Endothelial cell of umbilical vein (primary cell): ENCODE measurements at regions of chr16 and their contacts with region 1.

Region 1: DNA sequence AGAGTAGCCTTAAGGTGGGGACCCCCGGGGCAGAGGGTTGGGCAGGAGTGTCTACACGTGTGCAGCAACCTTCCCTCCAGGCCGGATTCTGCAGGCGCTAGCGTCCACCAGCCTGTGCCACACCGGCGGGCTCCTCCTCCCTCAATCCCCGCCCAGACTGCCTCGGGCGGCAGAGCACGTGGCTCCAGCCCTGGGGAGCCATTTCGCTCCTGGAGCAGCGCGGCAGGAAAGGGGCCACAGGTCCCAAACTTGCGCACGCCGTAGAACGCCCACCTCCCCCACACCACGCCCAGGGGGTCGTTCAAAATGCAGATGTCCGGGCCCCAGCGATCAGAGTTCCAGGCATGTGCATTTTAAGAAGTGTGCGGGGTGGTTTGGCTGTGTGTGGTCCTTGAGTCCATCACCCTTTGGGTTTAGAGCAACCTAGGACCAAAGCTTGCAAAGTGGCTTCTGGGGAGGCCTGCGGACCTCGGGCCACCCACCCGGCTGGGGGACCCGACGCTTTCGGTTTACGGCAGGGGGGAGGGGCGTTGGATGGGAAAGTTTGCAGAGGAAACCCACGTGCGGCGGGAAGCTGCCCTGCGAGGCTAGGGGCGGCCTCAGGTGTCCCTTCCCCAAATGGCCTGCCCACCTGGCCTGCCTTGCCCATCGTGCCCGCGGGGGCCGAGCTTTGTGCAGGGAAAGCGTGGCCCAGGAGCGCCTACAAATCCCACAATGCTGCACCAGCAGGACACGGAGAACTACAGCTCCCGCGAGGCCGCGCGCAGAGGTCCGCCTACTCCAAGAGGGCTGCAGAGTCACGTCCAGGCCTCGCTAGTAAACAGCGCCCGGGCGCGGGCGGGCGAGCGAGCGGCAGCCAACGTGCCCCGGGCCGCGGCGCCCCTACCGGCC is 1.4 kb downstream of the TFAP4 start:
- DNase-seq: peak; percentile 89
- H3K4me3 ChIP-seq: peak overlapping the region; percentile 58 to 89 (median 68)
- H3K27ac ChIP-seq: peak overlapping the region; percentile 51
- H3K4me1 ChIP-seq: peaks cover 15% of the 10 kb centered on the region
- H3K27me3 ChIP-seq: no peaks in the 10 kb centered on the region
- CTCF ChIP-seq: no peak
- POLR2A ChIP-seq: peak; percentile 55

Region 2: GRCh38 chr16:4136229-4136813 is 135.1 kb before region 1 on chr16:
- CTCF ChIA-PET with region 1: no interaction called
- POLR2A ChIA-PET with region 1: no interaction called
- dilution Hi-C with region 1: no loop called
- intact Hi-C with region 1: no loop called
- DNase-seq: no peak
- H3K4me3 ChIP-seq: no peak overlapping the region
- H3K27ac ChIP-seq: no peak overlapping the region
- H3K4me1 ChIP-seq: no peaks in the 10 kb centered on the region
- H3K27me3 ChIP-seq: peaks cover 0 to 4% of the 10 kb centered on the region in 2 experiments
- CTCF ChIP-seq: no peak
- POLR2A ChIP-seq: no peak

Region 3: GRCh38 chr16:4232541-4233386 is 38.7 kb before region 1 on chr16:
- CTCF ChIA-PET with region 1: no interaction called
- POLR2A ChIA-PET with region 1: no interaction called
- dilution Hi-C with region 1: no loop called
- intact Hi-C with region 1: no loop called
- DNase-seq: no peak
- H3K4me3 ChIP-seq: no peak overlapping the region
- H3K27ac ChIP-seq: no peak overlapping the region
- H3K4me1 ChIP-seq: no peaks in the 10 kb centered on the region
- H3K27me3 ChIP-seq: no peaks in the 10 kb centered on the region
- CTCF ChIP-seq: no peak
- POLR2A ChIP-seq: no peak

Region 4: DNA sequence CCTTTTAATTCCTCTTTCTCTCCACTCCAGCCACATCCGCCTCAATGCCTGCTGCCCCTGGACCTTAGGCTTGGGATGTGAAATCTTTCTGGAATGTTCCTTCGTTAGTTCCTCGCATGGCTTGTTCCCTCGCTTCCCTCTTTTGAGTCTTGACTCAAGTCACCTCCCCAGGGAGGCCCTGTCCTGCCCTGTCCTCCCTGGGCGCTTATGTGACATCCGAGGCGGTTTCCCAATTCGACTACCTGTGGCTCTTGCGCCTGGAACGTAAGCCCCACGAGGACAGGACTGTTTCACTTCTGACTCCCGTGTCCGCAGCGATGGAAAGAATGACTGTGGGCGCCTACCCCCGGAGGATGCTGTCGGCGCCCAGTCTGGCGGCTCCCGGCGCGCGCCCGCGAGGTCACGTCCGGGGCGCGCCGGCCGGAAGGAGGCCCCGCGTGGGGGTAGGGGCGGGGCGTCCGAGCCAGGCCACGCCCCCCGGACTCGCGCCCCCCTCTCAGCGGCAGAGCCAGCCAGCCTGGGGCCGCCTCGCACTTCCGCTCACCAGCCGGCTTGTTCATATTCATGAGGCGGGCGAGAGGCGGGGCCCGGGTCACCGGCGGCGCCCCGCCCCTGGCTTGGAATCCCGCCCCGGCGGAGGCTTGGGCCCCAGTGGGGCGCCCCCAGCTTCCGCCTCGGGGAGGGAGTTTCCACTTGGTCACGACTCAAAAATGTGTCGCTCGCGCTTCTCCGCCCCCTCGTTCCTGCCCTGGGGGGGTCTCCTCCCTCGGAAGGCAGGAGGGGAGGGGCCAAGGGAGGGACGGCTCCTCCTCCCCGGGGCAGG is 36.0 kb after region 1 on chr16:
- CTCF ChIA-PET with region 1: interaction called, 20 read pairs
- POLR2A ChIA-PET with region 1: no interaction called
- dilution Hi-C with region 1: no loop called
- intact Hi-C with region 1: loop called (anchors 1 kb)
- DNase-seq: peak; percentile 88
- H3K4me3 ChIP-seq: peak overlapping the region in 2 of 3 experiments; percentile 25 to 33
- H3K27ac ChIP-seq: peak overlapping the region; percentile 76
- H3K4me1 ChIP-seq: peaks cover 7% of the 10 kb centered on the region
- H3K27me3 ChIP-seq: no peaks in the 10 kb centered on the region
- CTCF ChIP-seq: no peak
- POLR2A ChIP-seq: no peak

Region 5: DNA sequence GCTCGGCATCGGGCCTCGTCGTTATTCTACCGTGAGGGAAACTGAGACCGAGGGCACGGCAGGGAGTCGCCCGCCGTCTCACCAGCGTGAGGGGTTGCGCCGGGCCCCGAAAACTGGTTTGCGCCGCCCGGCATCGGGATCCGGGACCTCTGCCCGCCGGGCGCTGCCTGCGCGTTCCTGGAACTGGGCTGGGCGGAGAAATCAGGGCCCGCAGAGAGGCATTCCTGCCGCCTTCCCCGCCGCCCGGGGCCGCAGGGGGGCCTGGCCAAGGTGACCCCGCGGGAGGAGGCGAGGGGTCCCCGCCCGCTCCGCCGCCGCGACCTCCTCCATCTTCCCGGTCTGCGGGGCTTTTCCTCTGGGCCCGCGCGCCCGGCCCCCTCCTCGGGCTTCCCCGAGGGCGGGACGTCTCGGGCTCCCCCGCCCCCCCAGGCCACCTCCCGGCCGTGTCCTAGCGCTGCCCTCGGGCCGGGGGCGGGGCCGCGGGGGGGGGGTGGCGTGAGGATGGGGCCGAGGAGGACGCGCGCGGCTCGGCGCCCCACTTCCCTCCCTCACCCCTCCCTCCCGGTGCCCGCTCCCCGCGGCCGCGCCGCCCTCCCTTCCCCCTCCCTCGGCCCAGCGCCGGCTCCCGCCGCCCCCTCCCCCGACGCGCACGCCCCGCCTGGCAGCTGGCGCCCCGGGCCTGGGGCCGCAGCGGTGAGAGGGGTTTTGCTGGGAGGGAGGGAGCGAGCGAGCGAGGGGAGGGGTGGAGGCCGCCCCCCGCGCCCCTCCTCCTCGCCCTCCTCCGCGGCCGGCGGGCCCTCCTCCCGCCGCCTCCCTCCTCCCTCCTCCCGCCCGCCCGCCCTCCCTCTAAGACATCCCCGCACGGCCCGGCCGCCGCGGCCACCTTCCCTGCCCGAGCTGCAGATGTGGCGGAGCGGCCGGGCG is 44.0 kb after region 1 on chr16 and contains the start of gene GLIS2:
- CTCF ChIA-PET with region 1: interaction called, 20 read pairs
- POLR2A ChIA-PET with region 1: interaction called, 5 read pairs
- dilution Hi-C with region 1: no loop called
- intact Hi-C with region 1: loop called (anchors 2 kb)
- DNase-seq: peak; percentile 60
- H3K4me3 ChIP-seq: peak within 1 kb of the TSS; percentile 56 to 77 (median 59)
- H3K27ac ChIP-seq: peak within 1 kb of the TSS; percentile 22
- H3K4me1 ChIP-seq: peaks cover 21% of the 10 kb centered on the region
- H3K27me3 ChIP-seq: no peaks in the 10 kb centered on the region
- CTCF ChIP-seq: no peak
- POLR2A ChIP-seq: no peak
- total RNA-seq, gene GLIS2: 10.1 and 11.3 TPM in 2 replicates

Region 6: DNA sequence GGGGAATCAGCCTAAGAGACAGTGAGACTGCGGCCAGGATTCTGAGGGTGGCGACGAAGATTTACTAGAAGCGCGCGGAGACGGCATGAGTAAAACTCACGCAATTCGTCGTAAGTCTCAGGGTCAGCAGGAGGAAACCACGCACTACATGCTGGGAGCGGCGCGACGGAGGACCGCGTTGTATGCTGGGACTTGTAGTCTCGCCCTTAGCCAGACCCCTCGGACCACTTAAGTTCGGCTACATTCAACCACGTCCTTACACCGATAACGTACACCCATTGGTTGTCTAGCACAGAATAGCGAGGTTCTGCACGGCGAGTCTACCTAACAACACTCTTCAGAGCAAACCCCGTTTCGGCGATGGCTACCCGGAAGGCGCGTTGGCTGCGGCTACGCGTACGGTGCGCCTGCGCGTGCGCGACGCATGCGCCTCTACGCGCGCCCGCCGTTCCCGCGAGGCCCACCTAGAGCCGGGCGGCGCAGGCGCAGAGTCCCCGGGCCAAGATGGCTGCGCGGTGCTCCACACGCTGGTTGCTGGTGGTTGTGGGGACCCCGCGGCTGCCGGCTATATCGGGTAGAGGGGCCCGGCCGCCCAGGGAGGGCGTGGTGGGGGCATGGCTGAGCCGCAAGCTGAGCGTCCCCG is 154.1 kb after region 1 on chr16 and contains the start of gene DNAJA3:
- CTCF ChIA-PET with region 1: no interaction called
- POLR2A ChIA-PET with region 1: no interaction called
- dilution Hi-C with region 1: no loop called
- intact Hi-C with region 1: no loop called
- DNase-seq: peak; percentile 96
- H3K4me3 ChIP-seq: peak within 1 kb of the TSS; percentile 64 to 84 (median 81)
- H3K27ac ChIP-seq: peak within 1 kb of the TSS; percentile 93
- H3K4me1 ChIP-seq: peaks cover 16% of the 10 kb centered on the region
- H3K27me3 ChIP-seq: no peaks in the 10 kb centered on the region
- CTCF ChIP-seq: no peak
- POLR2A ChIP-seq: peak; percentile 93
- total RNA-seq, gene DNAJA3: 40.6 and 45.4 TPM in 2 replicates